ENCODE measurements at regions of chr6 and their contacts with region 1.

Region 1: DNA sequence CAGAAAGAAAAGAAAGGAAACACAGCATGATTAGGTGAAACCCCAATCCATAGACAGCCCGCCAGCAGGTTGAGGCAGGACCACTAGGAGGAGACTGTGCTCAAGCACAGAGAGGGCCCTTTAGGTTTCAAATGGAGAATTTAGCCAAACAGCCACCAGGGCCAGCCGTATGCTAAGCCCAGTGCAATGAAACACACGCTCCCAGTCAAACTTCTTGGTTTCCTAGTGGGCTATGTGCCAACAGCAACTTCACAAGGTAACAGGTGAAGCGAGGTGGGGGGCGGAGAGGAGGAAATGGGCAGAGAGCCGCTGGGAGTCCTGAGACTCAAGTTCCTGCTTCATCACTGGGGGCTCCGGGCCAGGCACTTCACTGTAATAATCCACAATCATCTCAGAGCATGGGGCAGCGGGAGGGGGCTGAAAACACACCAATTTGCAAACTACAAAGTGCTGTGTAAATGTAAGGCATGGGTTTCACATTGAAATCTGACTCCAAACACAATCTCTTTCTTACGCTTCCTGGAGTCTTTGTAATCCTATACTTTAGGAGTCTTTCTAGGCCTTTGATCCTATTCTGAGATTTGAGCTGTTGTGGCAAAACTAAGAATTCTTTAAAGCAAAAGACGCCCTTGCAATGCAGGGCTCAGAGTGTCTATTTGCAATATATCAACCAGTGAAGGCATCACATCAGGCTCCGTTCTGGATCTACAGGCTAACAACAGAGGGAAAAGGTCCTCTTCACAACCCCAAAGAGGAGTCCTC is 117.3 kb downstream of the OPRM1 start:
- DNase-seq: no peak
- ATAC-seq: peak; percentile 75

Region 2: DNA sequence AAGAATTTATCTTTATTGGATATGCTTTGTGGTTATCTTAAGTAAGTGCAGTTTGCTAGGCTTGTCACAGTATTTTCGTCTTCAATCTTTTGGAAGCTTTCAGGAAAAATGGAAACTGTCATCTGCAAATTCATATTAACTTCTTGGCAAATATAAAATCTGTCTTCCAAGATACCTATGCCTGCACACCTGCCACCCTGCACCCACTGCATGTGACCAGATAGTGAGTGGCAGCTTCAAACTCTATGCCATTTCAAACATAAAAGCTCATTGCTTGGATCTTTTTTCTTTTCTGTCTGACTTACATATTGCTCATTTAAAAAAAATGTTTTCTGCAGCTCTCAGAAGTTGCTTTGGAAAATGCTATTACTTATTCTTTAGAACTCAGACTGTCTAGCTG is 103.2 kb before region 1 on chr6:
- intact Hi-C with region 1: no loop called
- DNase-seq: no peak
- ATAC-seq: no peak

Region 3: DNA sequence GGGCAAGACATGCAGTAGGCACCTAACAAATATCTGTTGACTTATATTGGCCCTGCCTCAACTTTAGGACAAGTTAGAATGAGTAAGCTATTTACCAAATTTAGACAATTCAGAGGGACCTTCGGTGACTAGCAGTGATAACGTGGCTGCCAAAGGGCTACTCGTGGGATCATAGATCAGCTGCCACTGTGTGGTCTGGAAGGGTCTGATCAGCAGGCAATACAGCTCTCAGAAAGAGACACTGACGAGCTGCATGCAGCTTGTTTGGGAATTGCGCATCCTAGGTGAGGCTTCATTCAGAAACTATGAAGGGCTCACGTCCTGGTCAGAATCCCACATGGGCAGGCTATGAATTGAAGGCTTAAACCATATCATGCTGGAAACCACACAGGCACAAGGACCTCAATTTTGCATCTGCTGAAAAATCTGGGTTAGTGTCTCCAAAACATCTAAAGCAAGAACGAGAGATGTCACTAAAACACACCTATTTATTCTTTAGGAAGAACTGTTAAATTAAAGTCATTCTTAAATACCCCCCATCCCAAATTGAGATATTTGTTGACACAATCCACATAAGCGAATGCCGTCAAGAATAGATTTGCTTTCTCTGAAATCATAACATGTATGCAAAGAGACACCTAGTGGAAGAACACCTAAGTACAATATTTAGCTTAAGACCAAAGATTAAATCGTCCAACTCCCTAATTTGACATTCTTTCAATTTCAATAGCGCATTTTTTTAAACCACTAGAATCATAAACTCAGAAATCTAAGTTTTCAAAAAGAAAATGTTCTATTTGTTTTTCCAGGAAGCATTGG is 120.7 kb after region 1 on chr6:
- intact Hi-C with region 1: loop called (anchors 5 kb)
- DNase-seq: no peak
- ATAC-seq: no peak

Region 4: GRCh38 chr6:154370545-154370944 is 214.2 kb after region 1 on chr6:
- intact Hi-C with region 1: loop called (anchors 5 kb)
- DNase-seq: no peak
- ATAC-seq: peak; percentile 78

Measured in Right ventricle myocardium superior (tissue), 1 donor.